Left ventricle myocardium superior (tissue), 1 donor: ENCODE measurements at regions of chr7 and their contacts with region 1.

Region 1: GRCh38 chr7:150448789-150449147 is 1.7 kb upstream of the GIMAP8 start:
- DNase-seq: peak; percentile 83
- ATAC-seq: peak; percentile 61

Region 2: GRCh38 chr7:150502519-150502918 is 53.8 kb after region 1 on chr7:
- intact Hi-C with region 1: no loop called
- DNase-seq: no peak
- ATAC-seq: no peak

Region 3: GRCh38 chr7:150737265-150738055 is 288.7 kb after region 1 on chr7 and contains the start of gene GIMAP5:
- intact Hi-C with region 1: loop called (anchors 10 kb)
- DNase-seq: peak; percentile 43
- ATAC-seq: peak; percentile 75
- total RNA-seq, gene GIMAP5: 9.8 TPM

Region 4: DNA sequence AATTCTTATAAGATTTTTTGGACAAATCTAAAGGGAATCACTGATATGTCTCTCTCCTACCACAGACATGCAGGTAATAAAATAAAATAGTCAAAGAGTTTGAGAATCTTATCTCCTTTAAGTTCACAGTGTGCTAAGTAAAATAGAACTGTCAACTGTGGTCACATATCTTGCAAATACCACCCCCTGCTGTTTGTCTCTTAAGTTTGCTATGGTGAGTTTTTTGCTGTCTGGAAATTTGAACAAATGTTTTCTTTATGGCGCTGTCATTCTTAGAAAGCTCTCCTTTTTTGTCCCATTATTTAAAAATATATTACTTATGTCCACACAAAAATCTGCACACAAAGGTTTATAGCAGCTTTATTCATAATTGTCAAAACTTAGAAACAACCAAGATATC is 308.1 kb after region 1 on chr7:
- intact Hi-C with region 1: loop called (anchors 2 kb)
- DNase-seq: no peak
- ATAC-seq: peak; percentile 44